ENCODE measurements at regions of chr3 and their contacts with region 1.

Region 1: GRCh38 chr3:193446965-193447602 is 68.5 kb upstream of the ATP13A5 start:
- DNase-seq: no peak
- ATAC-seq: peak; percentile 20

Region 2: GRCh38 chr3:193271101-193271840 is 175.8 kb before region 1 on chr3:
- intact Hi-C with region 1: loop called (anchors 10 kb)
- DNase-seq: no peak
- ATAC-seq: no peak